ENCODE measurements at regions of chr9 and their contacts with region 1.

Region 1: GRCh38 chr9:126604059-126605055 is 9.4 kb upstream of the LMX1B start:
- DNase-seq: no peak
- ATAC-seq: no peak
- H3K4me3 ChIP-seq: no peak overlapping the region
- H3K27ac ChIP-seq: no peak overlapping the region
- H3K4me1 ChIP-seq: no peaks in the 10 kb centered on the region
- H3K27me3 ChIP-seq: no peaks in the 10 kb centered on the region
- CTCF ChIP-seq: no peak
- POLR2A ChIP-seq: no peak

Region 2: DNA sequence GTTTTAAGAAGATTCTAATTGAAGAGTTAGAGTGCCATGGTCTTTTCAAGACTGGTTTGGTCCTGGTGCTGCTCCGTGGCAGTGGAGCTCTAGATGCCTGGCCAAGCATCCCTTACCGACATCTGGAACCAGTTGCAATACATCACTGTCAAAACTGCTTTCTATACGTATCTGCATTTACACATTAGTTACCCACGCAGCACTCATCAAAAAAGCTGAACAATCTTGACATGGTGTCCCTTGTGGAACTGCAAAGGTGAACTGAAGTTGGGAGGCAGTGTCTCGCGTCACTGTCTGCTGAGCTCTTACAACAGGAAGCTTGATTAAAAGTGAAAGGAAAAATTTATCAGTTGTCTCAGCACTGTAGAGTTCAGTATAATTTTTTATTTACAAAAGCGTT is 774.6 kb before region 1 on chr9:
- intact Hi-C with region 1: no loop called
- DNase-seq: peak in 2 of 4 donors; percentile 24 to 41
- ATAC-seq: peak; percentile 47
- H3K4me3 ChIP-seq: peak overlapping the region in 1 of 2 donors; percentile 6
- H3K27ac ChIP-seq: peak overlapping the region in 3 of 4 donors; percentile 6 to 59 (median 39)
- H3K4me1 ChIP-seq: peaks cover 12% of the 10 kb centered on the region
- H3K27me3 ChIP-seq: no peaks in the 10 kb centered on the region
- CTCF ChIP-seq: no peak
- POLR2A ChIP-seq: no peak

Region 3: DNA sequence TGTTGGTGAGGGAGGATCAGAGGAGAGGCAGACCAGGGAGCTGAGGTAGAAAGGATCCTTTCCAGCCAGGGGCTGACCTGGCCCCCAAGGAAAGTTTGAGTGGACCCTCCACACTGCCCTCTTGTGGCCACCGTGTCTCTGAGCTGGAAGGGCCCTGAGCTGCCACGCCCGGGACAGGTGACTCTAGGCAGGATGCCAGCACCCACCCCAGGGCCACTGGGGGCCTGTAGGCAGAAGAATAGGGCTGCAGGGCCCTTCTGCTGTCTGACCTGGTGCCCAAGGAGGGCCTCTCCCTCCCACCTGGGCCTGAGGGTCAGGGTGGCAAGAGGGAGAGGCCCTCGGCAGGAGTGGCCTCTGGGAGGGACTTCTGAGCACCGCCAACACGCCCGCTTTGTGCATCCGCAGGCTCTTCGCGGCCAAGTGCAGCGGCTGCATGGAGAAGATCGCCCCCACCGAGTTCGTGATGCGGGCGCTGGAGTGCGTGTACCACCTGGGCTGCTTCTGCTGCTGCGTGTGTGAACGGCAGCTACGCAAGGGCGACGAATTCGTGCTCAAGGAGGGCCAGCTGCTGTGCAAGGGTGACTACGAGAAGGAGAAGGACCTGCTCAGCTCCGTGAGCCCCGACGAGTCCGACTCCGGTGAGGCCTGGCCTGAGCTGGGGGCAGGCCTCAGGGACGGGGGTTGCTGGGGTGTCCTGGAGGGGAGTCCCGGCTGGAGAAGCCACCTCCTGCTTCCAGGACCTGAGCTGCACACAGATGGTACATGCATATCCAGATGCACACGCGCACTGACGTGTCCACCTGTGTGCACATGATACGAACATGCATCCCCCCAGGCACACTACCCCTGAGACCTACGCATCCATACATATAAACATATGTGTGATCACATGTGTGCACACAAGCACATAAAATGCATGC is 86.3 kb after region 1 on chr9:
- intact Hi-C with region 1: loop called (anchors 5 kb)
- DNase-seq: peak; percentile 59 to 79 (median 70)
- ATAC-seq: peak; percentile 68
- H3K4me3 ChIP-seq: no peak overlapping the region
- H3K27ac ChIP-seq: no peak overlapping the region
- H3K4me1 ChIP-seq: no peaks in the 10 kb centered on the region
- H3K27me3 ChIP-seq: peaks cover 0 to under 1% of the 10 kb centered on the region in 2 donors
- CTCF ChIP-seq: peak; percentile 60 to 77 (median 72)
- POLR2A ChIP-seq: no peak

Region 4: GRCh38 chr9:126781186-126782052 is 177.1 kb after region 1 on chr9:
- intact Hi-C with region 1: loop called (anchors 10 kb)
- DNase-seq: peak; percentile 83 to 89 (median 84)
- ATAC-seq: peak; percentile 83
- H3K4me3 ChIP-seq: no peak overlapping the region
- H3K27ac ChIP-seq: no peak overlapping the region
- H3K4me1 ChIP-seq: peaks cover 8% of the 10 kb centered on the region
- H3K27me3 ChIP-seq: no peaks in the 10 kb centered on the region
- CTCF ChIP-seq: peak; percentile 86 to 94 (median 88)
- POLR2A ChIP-seq: no peak

Measured in body of pancreas (tissue), 4 donors.